Panc1 (cell line): ENCODE measurements at regions of chr20 and their contacts with region 1.

Region 1: DNA sequence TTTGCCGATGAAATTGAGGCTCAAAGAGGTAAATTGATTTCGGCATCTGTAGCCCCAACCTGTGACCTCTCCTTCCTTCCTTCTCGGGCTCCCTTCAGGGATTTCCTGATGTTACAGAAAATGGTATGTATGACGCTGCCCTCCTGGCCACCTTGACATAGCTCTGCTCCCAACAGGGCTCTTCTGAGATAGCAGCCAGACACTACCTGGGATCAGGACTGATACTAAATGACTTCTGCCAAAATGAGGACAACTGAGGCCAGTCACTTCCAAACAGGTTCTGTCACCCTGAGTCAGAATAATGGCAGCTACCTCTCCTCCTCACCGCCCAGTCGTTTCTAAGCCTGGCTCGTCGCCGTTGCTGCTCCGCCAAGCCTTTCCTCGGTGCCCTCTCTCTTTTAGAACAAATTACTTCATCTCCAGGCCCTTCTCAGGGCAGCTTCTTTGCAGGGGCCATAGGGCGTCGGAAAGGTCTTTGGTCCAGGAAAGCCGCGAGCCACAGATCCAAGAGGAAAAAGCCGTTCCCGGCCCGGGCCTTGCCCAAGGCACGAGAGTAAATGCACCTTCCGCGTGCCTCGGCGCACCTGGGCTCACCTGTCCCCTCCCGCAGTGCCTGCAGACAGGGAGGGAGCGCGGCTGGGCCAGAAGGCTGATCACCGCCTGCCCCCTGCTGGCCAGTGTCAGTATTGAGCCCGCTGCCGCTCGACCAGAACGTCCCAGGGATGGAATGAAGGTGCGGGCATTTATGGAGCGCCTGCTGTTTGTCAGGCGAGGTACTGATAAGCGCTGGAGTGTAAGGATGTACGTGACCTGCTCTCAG is 904 bp upstream of the LPIN3 start:
- DNase-seq: no peak
- ATAC-seq: peak; percentile 85
- H3K4me3 ChIP-seq: peak overlapping the region; percentile 52 to 86
- H3K27ac ChIP-seq: no peak overlapping the region
- H3K4me1 ChIP-seq: peaks cover 3% of the 10 kb centered on the region; the same call in 1 of the 2 replicates
- H3K27me3 ChIP-seq: no peaks in the 10 kb centered on the region
- CTCF ChIP-seq: peak; percentile 96

Region 2: GRCh38 chr20:41135187-41135887 is 204.4 kb before region 1 on chr20:
- CTCF ChIA-PET with region 1: interaction called, 40 read pairs
- POLR2A ChIA-PET with region 1: interaction called, 6 read pairs
- in situ Hi-C with region 1: no loop called
- intact Hi-C with region 1: loop called (anchors 2 kb)
- DNase-seq: no peak
- ATAC-seq: peak; percentile 47
- H3K4me3 ChIP-seq: no peak overlapping the region
- H3K27ac ChIP-seq: no peak overlapping the region
- H3K4me1 ChIP-seq: peaks cover 10% of the 10 kb centered on the region; the same call in 1 of the 2 replicates
- H3K27me3 ChIP-seq: no peaks in the 10 kb centered on the region
- CTCF ChIP-seq: peak; percentile 94

Region 3: GRCh38 chr20:41173161-41173721 is 166.5 kb before region 1 on chr20:
- CTCF ChIA-PET with region 1: interaction called, 24 read pairs
- POLR2A ChIA-PET with region 1: no interaction called
- in situ Hi-C with region 1: no loop called
- intact Hi-C with region 1: loop called (anchors 1 kb)
- DNase-seq: peak; percentile 18
- ATAC-seq: peak; percentile 92
- H3K4me3 ChIP-seq: no peak overlapping the region
- H3K27ac ChIP-seq: no peak overlapping the region
- H3K4me1 ChIP-seq: no peaks in the 10 kb centered on the region
- H3K27me3 ChIP-seq: no peaks in the 10 kb centered on the region
- CTCF ChIP-seq: peak; percentile 95

Region 4: DNA sequence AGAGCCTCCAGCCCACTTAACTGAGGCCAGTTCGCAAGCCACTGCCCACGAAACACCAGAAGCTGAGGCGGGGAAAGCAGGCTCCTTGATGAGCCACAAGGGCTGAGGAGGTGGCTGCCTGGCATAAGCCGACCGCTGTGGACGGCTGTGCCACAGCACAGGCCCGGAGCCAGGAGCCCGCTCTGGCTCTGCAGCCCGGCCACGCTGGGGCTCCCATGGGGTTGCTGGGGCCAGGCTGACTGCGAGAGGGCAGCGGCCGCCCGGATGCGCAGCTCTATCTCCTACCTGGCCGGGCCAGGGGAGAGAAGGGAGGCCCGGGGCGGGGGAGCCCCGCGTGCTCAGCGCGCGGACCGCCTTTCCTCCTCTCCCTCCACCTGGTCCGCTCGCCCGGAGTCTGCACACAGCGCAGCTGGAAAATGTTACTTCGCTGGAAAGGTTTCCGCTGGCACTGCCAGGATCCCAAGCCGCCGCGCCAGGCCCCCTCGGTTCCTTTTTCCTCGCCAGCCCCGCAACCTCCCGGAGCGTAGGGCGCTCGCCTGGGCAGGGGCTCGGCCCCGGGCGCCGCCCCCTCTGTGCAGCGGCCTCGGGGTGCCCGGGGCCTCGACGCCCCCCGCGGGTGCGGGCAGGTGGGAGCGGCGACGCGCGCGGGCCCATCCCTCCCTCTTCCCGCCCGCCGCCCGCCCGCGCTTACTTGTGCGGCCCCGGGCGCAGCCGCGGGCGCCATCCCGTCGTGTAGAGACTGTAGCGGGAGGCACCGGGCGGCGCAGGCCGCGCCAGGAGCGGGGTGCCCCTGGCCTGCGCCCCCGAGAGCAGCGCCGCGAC is 26.3 kb after region 1 on chr20:
- CTCF ChIA-PET with region 1: no interaction called
- POLR2A ChIA-PET with region 1: no interaction called
- in situ Hi-C with region 1: no loop called
- intact Hi-C with region 1: no loop called
- DNase-seq: no peak
- ATAC-seq: peak; percentile 46
- H3K4me3 ChIP-seq: 0 out of 4 replicates have a peak overlapping the region, but pooled peaks of 1 of the 2 experiments have one; percentile 1
- H3K27ac ChIP-seq: no peak overlapping the region
- H3K4me1 ChIP-seq: no peaks in the 10 kb centered on the region
- H3K27me3 ChIP-seq: no peaks in the 10 kb centered on the region; the same call in 1 of the 2 replicates
- CTCF ChIP-seq: no peak

Region 5: DNA sequence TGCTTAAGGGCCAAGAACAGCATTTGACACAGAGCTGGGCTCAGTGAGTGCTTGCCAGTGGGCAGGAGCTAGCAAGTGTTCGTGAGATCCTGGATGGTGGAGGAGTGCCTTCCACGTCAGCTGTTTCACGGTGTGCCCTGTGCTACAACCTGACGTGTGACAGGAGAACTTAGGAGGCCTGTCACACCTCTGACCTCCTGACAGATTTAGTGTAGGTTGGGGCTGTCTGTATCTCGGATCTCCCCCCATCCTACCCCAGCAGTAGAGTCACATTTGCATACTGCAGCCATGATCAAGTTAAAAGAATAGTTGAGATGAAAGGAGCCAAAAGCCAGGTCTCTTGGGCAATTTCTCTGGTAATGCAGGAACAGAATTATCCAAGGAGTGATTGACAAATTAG is 479.3 kb after region 1 on chr20:
- CTCF ChIA-PET with region 1: no interaction called
- POLR2A ChIA-PET with region 1: no interaction called
- in situ Hi-C with region 1: no loop called
- intact Hi-C with region 1: no loop called
- DNase-seq: no peak
- ATAC-seq: no peak
- H3K4me3 ChIP-seq: no peak overlapping the region
- H3K27ac ChIP-seq: no peak overlapping the region
- H3K4me1 ChIP-seq: no peaks in the 10 kb centered on the region
- H3K27me3 ChIP-seq: no peaks in the 10 kb centered on the region
- CTCF ChIP-seq: no peak